ENCODE measurements at regions of chr5 and their contacts with region 1.

Region 1: DNA sequence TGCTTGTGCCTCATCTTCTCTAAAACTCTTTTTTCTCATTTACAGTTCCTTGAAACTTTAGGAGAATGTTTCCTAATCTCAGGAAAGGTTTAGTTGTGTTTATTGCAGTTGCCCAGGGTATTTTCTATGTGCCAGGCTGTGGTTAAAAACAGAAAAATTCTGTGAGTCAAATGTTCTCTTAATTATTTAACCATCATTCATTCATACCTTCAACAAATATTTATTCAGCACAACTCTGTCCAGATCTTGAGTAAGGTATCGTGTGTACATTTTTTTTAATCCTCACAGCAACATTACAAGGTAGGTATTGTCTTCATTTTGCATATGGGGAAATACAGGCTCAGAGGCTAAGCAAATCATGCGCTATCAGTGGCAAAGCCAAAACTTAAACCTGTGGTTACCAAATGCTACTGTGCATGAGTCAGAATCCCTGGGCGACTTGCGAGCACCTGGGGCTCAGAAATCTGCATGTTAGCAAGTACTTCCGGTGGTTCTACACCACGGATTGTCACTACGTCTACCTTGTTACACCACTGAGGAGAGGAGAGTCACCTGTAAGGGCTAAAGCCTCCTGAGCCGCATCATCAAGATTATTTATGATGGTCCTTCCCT is 21.2 kb downstream of the C5orf58 start:
- DNase-seq: peak; percentile 65
- CTCF ChIP-seq: no peak

Region 2: DNA sequence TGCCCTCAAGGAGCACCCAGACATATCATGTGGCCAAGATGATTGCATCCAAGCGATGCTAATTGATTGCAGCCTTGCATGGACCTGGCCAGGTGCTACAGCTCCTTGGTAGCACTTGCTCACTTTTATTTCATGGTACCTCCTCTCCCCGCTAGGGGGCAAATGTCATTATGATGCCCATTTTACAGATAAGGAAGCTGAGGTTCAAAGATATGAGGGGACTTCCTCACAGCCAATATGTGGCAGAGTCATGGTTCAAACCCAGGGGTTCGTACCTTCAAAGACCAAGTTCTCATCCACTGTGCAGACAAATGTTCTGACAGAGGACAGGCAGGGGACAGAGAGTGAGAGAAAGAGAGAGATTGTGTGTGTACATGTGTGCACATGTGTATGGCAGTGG is 157.2 kb after region 1 on chr5:
- in situ Hi-C with region 1: loop called (anchors 10 kb)
- DNase-seq: peak; percentile 49
- CTCF ChIP-seq: peak; percentile 56